GM13977 (cell line): ENCODE measurements at regions of chr20 and their contacts with region 1.

Region 1: GRCh38 chr20:1313236-1313964 is 15.5 kb downstream of the SDCBP2 start:
- DNase-seq: peak; percentile 84
- CTCF ChIP-seq: peak; percentile 90

Region 2: DNA sequence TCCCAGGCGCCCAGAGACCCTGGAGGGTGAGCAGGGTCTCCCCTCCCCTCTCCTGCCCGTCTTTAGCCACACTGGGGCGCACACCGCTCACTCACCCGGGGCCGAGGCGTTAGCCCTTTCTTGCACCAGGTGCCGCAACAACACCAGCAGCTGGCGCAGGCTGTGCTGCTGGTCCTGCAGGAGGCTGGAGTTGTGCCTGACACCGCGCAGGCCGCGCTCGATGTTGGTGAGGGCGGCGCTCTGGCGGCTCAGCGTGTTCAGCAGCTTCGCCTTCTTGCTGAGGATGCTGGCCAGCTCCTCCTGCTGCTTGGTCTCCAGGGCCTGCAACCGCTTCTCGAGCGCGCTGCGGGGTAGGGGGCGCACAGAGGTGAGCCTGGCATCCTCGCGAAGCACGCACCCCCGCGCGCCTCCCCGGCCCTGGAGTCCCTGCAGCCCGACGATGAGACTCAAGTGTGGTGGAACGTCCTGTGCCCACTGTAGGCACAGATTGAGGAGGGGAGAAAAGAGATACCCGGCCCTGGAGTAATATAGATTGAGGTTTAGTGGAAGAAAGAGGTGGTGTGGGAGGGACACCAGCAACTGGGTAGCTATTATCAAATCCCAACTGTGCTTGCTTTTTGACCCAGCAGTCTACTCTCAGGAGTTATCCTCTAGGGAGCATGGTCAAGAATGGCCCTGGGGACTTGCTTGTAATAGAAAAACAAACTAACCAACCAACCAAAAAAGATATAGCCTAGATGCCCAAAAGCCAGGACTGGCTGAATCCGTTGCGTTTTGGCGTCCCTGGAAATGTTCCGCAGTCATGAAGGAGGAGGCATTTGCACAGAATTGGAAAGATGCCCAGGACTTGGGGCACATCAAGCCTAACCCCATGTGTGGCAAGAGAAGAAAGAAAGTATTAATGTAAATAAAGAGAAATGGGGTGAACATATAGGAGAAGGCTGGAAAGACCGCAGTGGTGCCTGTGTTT is 428.1 kb before region 1 on chr20:
- in situ Hi-C with region 1: no loop called
- DNase-seq: no peak
- CTCF ChIP-seq: no peak

Region 3: DNA sequence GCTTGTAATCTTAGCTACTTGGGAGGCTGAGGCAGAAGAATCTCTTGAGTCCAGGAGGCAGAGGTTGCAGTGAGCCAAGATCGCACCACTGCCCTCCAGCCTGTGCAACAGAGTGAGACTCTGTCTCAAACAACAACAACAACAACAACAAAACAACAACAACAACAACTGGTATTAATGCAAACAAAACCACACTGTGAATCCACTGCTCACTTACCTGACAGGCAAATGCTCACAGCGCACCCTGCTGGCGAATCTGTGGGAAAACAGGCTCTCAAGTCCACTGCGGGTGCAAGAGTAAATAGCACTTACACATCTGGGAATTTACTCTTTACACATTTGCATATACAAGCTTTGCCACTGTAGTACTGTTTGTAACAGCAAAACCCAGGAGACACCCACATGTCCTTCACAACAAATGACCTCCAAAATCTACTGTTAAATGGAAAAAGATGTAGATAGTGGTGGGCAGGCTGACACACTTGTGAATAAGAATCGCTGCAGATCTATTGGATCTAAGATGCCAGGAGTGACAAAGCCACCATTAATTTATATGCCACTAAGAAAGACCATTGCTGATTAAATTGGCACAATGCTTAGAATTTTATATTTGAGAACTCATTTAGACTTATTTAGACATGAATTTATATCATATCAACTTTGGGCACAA is 124.0 kb after region 1 on chr20:
- in situ Hi-C with region 1: loop called (anchors 5 kb)
- DNase-seq: peak; percentile 75
- CTCF ChIP-seq: peak; percentile 91